K562 (cell line): ENCODE measurements at regions of chr4 and their contacts with region 1.

Region 1: DNA sequence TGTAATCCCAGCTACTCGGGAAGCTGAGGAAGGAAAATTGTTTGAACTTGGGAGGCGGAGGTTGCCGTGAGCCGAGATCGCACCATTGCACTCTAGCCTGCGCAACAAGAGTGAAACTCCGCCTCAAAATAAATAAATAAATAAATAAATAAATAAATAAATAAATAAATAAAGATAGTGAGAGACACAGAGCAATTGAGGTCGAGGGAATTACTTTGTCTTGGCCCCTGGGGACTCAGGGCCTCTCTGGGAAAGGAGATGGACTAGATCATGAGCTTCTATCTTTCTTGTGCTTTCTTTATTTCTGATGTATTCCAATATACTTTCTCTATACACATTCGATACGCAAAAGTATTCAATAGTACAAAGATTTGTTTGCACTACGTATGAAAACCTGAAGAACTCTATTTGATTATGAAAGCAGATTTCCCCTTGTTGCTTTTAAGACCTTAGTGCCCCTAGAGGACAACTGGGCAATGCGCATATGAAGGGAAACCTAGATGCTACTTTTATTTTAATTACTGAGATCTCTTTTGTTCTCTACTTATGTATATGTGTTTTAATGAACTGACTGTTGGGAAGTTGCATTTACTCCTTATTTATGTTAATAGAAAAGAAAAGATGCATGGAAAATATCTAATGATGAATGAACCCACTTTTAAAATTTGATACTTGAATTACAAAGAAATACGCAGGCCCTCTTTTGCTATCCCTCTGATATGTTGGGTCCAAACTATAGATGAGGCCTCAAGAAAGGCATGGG is 12.8 kb upstream of the ELOVL6 start:
- DNase-seq: peak; percentile 27 to 56 (median 36)
- ATAC-seq: peak; percentile 85
- H3K4me3 ChIP-seq: no peak overlapping the region
- H3K27ac ChIP-seq: no peak overlapping the region
- H3K4me1 ChIP-seq: no peaks in the 10 kb centered on the region
- H3K27me3 ChIP-seq: no peaks in the 10 kb centered on the region
- CTCF ChIP-seq: peak; percentile 63 to 81 (median 70)
- EP300 ChIP-seq: no peak
- POLR2A ChIP-seq: no peak
- RAD21 ChIP-seq: peak; percentile 48 to 72; a peak in 3 of 4 replicates

Region 2: DNA sequence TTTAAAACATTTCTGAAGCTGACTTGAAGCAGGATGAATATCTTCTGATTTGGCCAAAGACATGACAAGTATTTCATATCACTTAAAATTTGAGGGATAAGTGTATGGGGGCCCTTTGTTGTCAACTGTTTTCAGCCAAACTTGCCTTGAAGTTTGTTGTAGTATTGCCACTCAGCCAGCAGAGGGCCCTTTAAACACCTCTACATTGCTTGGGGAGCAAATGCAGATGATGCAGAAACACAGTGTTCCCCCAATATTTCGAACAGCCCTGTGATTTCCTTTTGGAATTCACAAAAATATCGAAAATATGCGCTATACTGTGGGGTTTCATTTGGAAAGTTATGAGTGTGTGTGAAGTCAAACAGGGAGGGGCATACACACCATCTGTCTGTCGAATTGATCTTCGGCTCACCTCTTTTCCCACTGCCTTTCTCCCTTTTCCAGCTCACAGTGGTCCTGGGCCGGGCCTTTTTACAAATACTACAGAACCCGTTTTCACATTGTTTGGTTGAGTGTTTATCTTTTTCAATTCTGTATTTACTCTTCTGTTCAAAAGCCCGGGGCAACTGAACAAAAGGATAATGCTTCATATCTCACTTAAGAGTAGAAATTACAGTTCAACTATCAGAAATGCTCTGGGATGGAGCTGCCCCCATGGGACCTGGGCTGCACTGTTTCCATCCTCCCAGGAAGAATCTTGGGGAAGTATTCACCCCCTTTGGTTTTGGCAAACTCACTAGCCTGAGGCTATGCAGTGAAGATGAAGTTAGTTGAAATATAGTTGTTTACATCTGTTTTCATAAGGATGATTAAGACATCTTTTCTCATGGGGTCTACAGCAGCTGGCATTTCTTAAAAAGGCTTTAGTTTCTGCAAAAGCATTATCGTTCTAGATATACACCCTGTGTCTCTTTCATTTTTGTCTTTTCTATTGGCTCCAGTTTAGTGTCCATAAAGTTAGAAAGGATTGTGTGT is 160.9 kb before region 1 on chr4:
- CTCF ChIA-PET with region 1: no interaction called
- POLR2A ChIA-PET with region 1: no interaction called
- in situ Hi-C with region 1: no loop called
- intact Hi-C with region 1: loop called (anchors 5 kb)
- DNase-seq: peak; percentile 48 to 65 (median 60)
- ATAC-seq: peak; percentile 77
- H3K4me3 ChIP-seq: no peak overlapping the region
- H3K27ac ChIP-seq: no peak overlapping the region
- H3K4me1 ChIP-seq: no peaks in the 10 kb centered on the region
- H3K27me3 ChIP-seq: no peaks in the 10 kb centered on the region
- CTCF ChIP-seq: peak; percentile 60 to 75 (median 73)
- EP300 ChIP-seq: no peak
- POLR2A ChIP-seq: no peak
- RAD21 ChIP-seq: peak; percentile 72 to 76

Region 3: GRCh38 chr4:110231869-110232268 is 20.7 kb after region 1 on chr4:
- CTCF ChIA-PET with region 1: no interaction called
- POLR2A ChIA-PET with region 1: no interaction called
- in situ Hi-C with region 1: no loop called
- intact Hi-C with region 1: no loop called
- DNase-seq: peak in 2 of 4 experiments; percentile 29 to 37
- ATAC-seq: peak; percentile 65
- H3K4me3 ChIP-seq: no peak overlapping the region
- H3K27ac ChIP-seq: no peak overlapping the region
- H3K4me1 ChIP-seq: peaks cover 0 to 3% of the 10 kb centered on the region in 2 experiments; a peak in 1 of 5 replicates
- H3K27me3 ChIP-seq: no peaks in the 10 kb centered on the region
- CTCF ChIP-seq: no peak
- EP300 ChIP-seq: no peak
- POLR2A ChIP-seq: no peak
- RAD21 ChIP-seq: no peak

Region 4: GRCh38 chr4:110287130-110287529 is 75.9 kb after region 1 on chr4:
- CTCF ChIA-PET with region 1: no interaction called
- POLR2A ChIA-PET with region 1: no interaction called
- in situ Hi-C with region 1: loop called (anchors 5 kb)
- intact Hi-C with region 1: no loop called
- DNase-seq: no peak
- ATAC-seq: peak; percentile 56; the same call in 2 of the 3 replicates
- H3K4me3 ChIP-seq: no peak overlapping the region
- H3K27ac ChIP-seq: no peak overlapping the region
- H3K4me1 ChIP-seq: no peaks in the 10 kb centered on the region; a peak in 2 of 5 replicates
- H3K27me3 ChIP-seq: peaks cover 0 to 9% of the 10 kb centered on the region in 2 experiments; a peak in 3 of 5 replicates
- CTCF ChIP-seq: no peak
- EP300 ChIP-seq: no peak
- POLR2A ChIP-seq: no peak
- RAD21 ChIP-seq: no peak

Region 5: DNA sequence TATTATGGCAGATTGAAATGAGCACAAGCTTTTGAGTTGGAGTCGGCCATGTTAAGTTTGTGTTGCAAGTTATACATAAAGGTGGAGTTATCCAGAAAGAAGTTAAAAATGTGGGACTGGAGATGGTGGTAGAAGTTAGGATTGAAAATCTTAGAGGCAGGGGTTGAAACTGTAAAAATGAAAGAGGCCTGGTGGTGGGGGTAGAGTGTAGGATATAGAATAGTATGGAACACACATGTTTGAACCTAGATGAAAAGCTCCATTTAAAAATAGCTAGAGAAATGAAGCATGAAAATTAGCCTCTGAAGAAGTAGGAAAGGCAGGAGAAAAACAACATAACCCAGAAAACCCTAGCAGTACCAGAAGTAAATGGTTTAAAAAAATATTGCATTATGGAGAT is 133.0 kb after region 1 on chr4:
- CTCF ChIA-PET with region 1: no interaction called
- POLR2A ChIA-PET with region 1: no interaction called
- in situ Hi-C with region 1: no loop called
- intact Hi-C with region 1: no loop called
- DNase-seq: peak in 2 of 4 experiments; percentile 6 to 15
- ATAC-seq: peak; percentile 73
- H3K4me3 ChIP-seq: no peak overlapping the region
- H3K27ac ChIP-seq: no peak overlapping the region
- H3K4me1 ChIP-seq: no peaks in the 10 kb centered on the region
- H3K27me3 ChIP-seq: no peaks in the 10 kb centered on the region
- CTCF ChIP-seq: peak; percentile 20 to 50 (median 25); a peak in 2 of 6 replicates
- EP300 ChIP-seq: no peak
- POLR2A ChIP-seq: no peak
- RAD21 ChIP-seq: peak; percentile 51 to 53

Region 6: GRCh38 chr4:110516106-110516922 is 305.1 kb after region 1 on chr4:
- CTCF ChIA-PET with region 1: no interaction called
- POLR2A ChIA-PET with region 1: no interaction called
- in situ Hi-C with region 1: no loop called
- intact Hi-C with region 1: loop called (anchors 10 kb)
- DNase-seq: peak; percentile 44 to 67 (median 51)
- ATAC-seq: peak; percentile 97
- H3K4me3 ChIP-seq: no peak overlapping the region
- H3K27ac ChIP-seq: no peak overlapping the region
- H3K4me1 ChIP-seq: no peaks in the 10 kb centered on the region
- H3K27me3 ChIP-seq: no peaks in the 10 kb centered on the region
- CTCF ChIP-seq: peak; percentile 69 to 81 (median 76)
- EP300 ChIP-seq: no peak
- POLR2A ChIP-seq: no peak
- RAD21 ChIP-seq: peak; percentile 31 to 48